ENCODE measurements at regions of chr4 and their contacts with region 1.

Region 1: GRCh38 chr4:185811509-185812364 is at the start of gene SORBS2:
- DNase-seq: peak; percentile 46
- ATAC-seq: peak; percentile 74
- total RNA-seq, gene SORBS2: 911 TPM

Region 2: DNA sequence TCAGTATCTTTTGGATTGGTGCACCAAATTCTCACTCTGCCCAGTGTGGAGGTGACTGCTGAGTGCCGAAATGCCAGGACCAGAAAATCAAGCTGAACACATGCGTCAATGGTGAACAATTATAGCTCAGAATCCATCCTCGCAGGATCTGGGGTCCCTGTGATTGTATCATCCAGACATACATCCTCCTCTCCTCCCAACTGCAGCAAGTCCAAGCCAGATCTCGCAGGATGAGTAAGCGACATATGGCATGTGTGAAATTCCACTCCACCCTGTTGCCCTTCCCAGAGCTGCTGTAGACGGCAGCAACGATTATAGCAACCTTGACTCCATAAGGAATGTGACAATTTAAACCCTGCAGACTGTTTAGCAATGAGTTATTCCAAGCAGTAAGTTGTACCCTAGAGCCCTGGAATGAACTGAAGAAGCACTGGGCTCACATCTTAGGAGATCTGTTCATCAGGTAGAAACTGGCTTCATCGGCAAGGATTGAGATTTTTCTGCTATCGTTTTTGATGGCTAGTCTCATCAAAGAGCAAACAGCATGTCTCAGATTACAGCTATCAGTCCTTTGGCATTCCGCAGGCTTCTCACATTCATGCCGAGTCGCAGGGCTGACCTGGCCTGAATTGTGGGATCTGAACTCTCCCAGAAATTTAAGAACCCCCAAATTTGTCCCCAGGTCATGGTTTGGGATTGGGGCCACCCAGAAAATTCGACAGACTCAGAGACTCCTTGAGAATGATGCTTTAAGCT is 35.8 kb after region 1 on chr4:
- intact Hi-C with region 1: loop called (anchors 2 kb)
- DNase-seq: peak; percentile 83
- ATAC-seq: peak; percentile 87